ENCODE measurements at regions of chr2 and their contacts with region 1.

Region 1: GRCh38 chr2:69816923-69817542 is 12.4 kb upstream of the GMCL1 start:
- DNase-seq: peak; percentile 90
- H3K4me3 ChIP-seq: no peak overlapping the region
- H3K27ac ChIP-seq: no peak overlapping the region
- H3K4me1 ChIP-seq: peaks cover 6% of the 10 kb centered on the region
- H3K27me3 ChIP-seq: no peaks in the 10 kb centered on the region
- CTCF ChIP-seq: peak; percentile 85

Region 2: GRCh38 chr2:69741619-69742466 is 75.2 kb before region 1 on chr2 and contains the start of gene ANXA4:
- CTCF ChIA-PET with region 1: no interaction called
- POLR2A ChIA-PET with region 1: no interaction called
- intact Hi-C with region 1: loop called (anchors 5 kb)
- DNase-seq: peak; percentile 56
- H3K4me3 ChIP-seq: peak within 1 kb of the TSS; percentile 54
- H3K27ac ChIP-seq: peak within 1 kb of the TSS; percentile 51
- H3K4me1 ChIP-seq: peaks cover 3% of the 10 kb centered on the region
- H3K27me3 ChIP-seq: no peaks in the 10 kb centered on the region
- CTCF ChIP-seq: no peak
- total RNA-seq, gene ANXA4: 5.1 and 6.5 TPM in 2 replicates

Region 3: GRCh38 chr2:70029814-70030409 is 212.9 kb after region 1 on chr2:
- CTCF ChIA-PET with region 1: no interaction called
- POLR2A ChIA-PET with region 1: no interaction called
- intact Hi-C with region 1: no loop called
- DNase-seq: peak; percentile 95
- H3K4me3 ChIP-seq: no peak overlapping the region
- H3K27ac ChIP-seq: peak overlapping the region; percentile 89
- H3K4me1 ChIP-seq: peaks cover 28% of the 10 kb centered on the region
- H3K27me3 ChIP-seq: no peaks in the 10 kb centered on the region
- CTCF ChIP-seq: no peak

Measured in A673 (cell line).